T-cell (primary cell): ENCODE measurements at regions of chr11 and their contacts with region 1.

Region 1: DNA sequence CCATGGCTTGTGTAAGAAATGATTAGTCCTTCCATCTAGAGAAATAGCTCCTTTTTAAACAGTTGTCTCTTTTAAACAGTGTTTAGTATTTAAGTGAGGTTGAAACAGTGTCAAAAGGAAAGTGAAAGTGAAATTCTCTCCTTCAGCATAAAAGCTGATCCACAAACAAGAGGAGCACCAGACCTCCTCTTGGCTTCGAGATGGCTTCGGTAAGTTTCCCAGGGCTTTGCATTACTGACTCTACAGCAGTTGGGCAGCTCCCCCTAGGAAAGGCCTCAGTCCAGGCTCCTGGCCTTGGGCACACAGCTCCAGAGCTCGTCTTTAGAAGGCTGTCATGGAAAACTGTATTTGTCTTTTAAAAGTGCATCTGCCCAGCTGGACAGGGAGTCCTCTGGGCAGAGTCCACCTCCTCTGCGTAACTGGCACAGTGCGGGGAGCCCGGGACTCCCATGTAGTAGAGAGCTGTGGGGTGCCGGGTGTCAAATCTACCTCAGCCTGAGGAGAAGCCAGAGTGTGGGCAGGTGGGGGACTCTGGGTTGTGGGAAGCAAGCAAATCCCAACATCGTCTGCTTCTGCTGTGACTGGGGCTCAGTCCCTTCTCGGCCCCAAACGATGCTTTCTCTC is at the start of gene PLAAT4:
- DNase-seq: peak in 19 of 35 experiments; percentile 12 to 73 (median 36)
- ATAC-seq: peak; percentile 56 to 72 (median 58)
- H3K4me3 ChIP-seq: peak within 1 kb of the TSS; percentile 72 to 84
- H3K4me3 Mint-ChIP-seq: peak within 1 kb of the TSS; percentile 87 to 92 (median 91)
- H3K27ac ChIP-seq: peak within 1 kb of the TSS; percentile 92
- H3K27ac Mint-ChIP-seq: peak within 1 kb of the TSS; percentile 98 to 99
- H3K4me1 ChIP-seq: peaks cover 40 to 84% of the 10 kb centered on the region in 2 experiments
- H3K4me1 Mint-ChIP-seq: peaks cover 84 to 90% (median 89%) of the 10 kb centered on the region in 3 donors
- H3K27me3 ChIP-seq: no peaks in the 10 kb centered on the region
- H3K27me3 Mint-ChIP-seq: no peaks in the 10 kb centered on the region
- total RNA-seq, gene PLAAT4: 90.2 to 144 (median 126) TPM

Region 2: GRCh38 chr11:63551091-63551888 is 14.5 kb after region 1 on chr11:
- CTCF ChIA-PET with region 1: interaction called, 3 to 10 read pairs
- POLR2A ChIA-PET with region 1: interaction called, 4 to 7 read pairs
- DNase-seq: peak in 10 of 35 experiments; percentile 25 to 55 (median 36)
- ATAC-seq: peak in 3 of 4 experiments; percentile 5 to 25 (median 21)
- H3K4me3 ChIP-seq: peak overlapping the region; percentile 46 to 53
- H3K4me3 Mint-ChIP-seq: peak overlapping the region; percentile 77 to 82 (median 81)
- H3K27ac ChIP-seq: peak overlapping the region; percentile 81
- H3K27ac Mint-ChIP-seq: peak overlapping the region; percentile 99
- H3K4me1 ChIP-seq: peaks cover 21 to 50% of the 10 kb centered on the region in 2 experiments
- H3K4me1 Mint-ChIP-seq: peaks cover 51 to 76% (median 57%) of the 10 kb centered on the region in 3 donors
- H3K27me3 ChIP-seq: no peaks in the 10 kb centered on the region
- H3K27me3 Mint-ChIP-seq: no peaks in the 10 kb centered on the region

Region 3: GRCh38 chr11:63567044-63567840 is 30.5 kb after region 1 on chr11:
- CTCF ChIA-PET with region 1: interaction called in 1 of 2 experiments, 10 read pairs
- POLR2A ChIA-PET with region 1: interaction called, 3 to 20 read pairs
- DNase-seq: peak in 32 of 35 experiments; percentile 49 to 90 (median 78)
- ATAC-seq: peak; percentile 88 to 95 (median 92)
- H3K4me3 ChIP-seq: no peak overlapping the region
- H3K4me3 Mint-ChIP-seq: peak overlapping the region; percentile 15 to 67 (median 60)
- H3K27ac ChIP-seq: peak overlapping the region; percentile 99
- H3K27ac Mint-ChIP-seq: peak overlapping the region; percentile 87 to 92
- H3K4me1 ChIP-seq: peaks cover 18 to 49% of the 10 kb centered on the region in 2 experiments
- H3K4me1 Mint-ChIP-seq: peaks cover 40 to 57% (median 41%) of the 10 kb centered on the region in 3 donors
- H3K27me3 ChIP-seq: no peaks in the 10 kb centered on the region
- H3K27me3 Mint-ChIP-seq: no peaks in the 10 kb centered on the region